Aorta (tissue), 5 donors: ENCODE measurements at regions of chr7 and their contacts with region 1.

Region 1: GRCh38 chr7:604001-604883 is 84.6 kb upstream of the PDGFA start:
- DNase-seq: peak; percentile 96 to 98
- ATAC-seq: peak; percentile 88
- H3K4me3 ChIP-seq: no peak overlapping the region
- H3K27ac ChIP-seq: peak overlapping the region; percentile 88 to 98
- H3K4me1 ChIP-seq: no peaks in the 10 kb centered on the region
- H3K27me3 ChIP-seq: no peaks in the 10 kb centered on the region

Region 2: GRCh38 chr7:471866-472639 is 132.2 kb before region 1 on chr7:
- intact Hi-C with region 1: no loop called
- DNase-seq: peak; percentile 96 to 97
- ATAC-seq: peak; percentile 89
- H3K4me3 ChIP-seq: no peak overlapping the region
- H3K27ac ChIP-seq: peak overlapping the region in 1 of 2 donors; percentile 76
- H3K4me1 ChIP-seq: no peaks in the 10 kb centered on the region
- H3K27me3 ChIP-seq: no peaks in the 10 kb centered on the region

Region 3: DNA sequence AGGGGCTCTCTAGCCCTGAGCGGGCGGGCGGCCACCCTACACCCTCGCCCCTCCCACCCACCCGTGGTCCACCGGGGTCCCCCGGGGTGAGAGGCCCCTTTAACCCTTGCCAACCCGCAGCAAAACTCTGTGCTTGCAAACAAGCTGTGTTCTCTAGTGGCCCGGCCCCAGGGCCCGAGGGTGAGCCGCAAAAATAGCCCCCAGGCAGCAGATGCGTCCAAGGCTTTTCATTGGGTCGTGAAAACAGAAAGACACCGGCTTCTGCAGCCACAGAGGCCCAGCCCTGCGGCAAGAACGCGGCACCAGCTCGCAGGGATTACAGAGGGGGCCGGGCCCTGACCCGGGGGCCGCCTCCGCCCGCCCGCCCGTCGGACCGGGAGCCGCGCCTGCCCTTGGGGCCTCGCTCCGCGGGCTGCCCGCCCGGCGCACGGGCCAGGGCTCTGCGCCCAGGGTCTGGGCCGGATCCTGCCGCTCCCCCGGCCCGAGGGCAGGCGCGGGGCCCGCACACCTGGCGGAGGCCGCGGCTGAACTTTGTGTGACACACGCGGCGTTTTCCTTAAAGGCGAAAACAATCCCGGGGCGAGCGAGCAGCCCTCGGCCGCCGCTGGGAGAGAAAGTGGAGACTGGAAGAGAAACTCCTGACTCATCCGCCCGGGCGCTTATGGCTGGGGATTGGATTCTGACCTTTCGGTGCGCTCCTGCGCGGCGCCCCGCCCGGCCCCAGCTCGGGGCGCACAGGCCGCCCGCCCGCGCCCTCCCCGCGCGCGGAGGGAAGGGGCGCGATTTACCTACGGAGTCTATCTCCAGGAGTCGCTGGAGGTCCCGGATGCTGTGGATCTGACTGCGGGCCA is 87.4 kb before region 1 on chr7:
- intact Hi-C with region 1: loop called (anchors 1 to 2 kb)
- DNase-seq: peak; percentile 76 to 89
- ATAC-seq: no peak
- H3K4me3 ChIP-seq: peak overlapping the region; percentile 89 to 95
- H3K27ac ChIP-seq: peak overlapping the region; percentile 78 to 90
- H3K4me1 ChIP-seq: peaks cover 0 to 3% of the 10 kb centered on the region in 2 donors
- H3K27me3 ChIP-seq: no peaks in the 10 kb centered on the region

Region 4: GRCh38 chr7:522071-522950 is 81.9 kb before region 1 on chr7:
- intact Hi-C with region 1: loop called (anchors 1 to 2 kb)
- DNase-seq: peak in 1 of 2 donors; percentile 81
- ATAC-seq: peak; percentile 24
- H3K4me3 ChIP-seq: peak overlapping the region; percentile 16 to 43
- H3K27ac ChIP-seq: peak overlapping the region in 1 of 2 donors; percentile 53
- H3K4me1 ChIP-seq: peaks cover 0 to 3% of the 10 kb centered on the region in 2 donors
- H3K27me3 ChIP-seq: no peaks in the 10 kb centered on the region

Region 5: GRCh38 chr7:557558-557881 is 46.7 kb before region 1 on chr7:
- intact Hi-C with region 1: loop called in 1 of 2 experiments (anchors 5 kb)
- DNase-seq: peak in 1 of 2 donors; percentile 82
- ATAC-seq: peak; percentile 68
- H3K4me3 ChIP-seq: no peak overlapping the region
- H3K27ac ChIP-seq: peak overlapping the region in 1 of 2 donors; percentile 77
- H3K4me1 ChIP-seq: no peaks in the 10 kb centered on the region
- H3K27me3 ChIP-seq: no peaks in the 10 kb centered on the region